Naive thymus-derived CD8-positive, alpha-beta T cell (primary cell): ENCODE measurements at regions of chr20 and their contacts with region 1.

Region 1: DNA sequence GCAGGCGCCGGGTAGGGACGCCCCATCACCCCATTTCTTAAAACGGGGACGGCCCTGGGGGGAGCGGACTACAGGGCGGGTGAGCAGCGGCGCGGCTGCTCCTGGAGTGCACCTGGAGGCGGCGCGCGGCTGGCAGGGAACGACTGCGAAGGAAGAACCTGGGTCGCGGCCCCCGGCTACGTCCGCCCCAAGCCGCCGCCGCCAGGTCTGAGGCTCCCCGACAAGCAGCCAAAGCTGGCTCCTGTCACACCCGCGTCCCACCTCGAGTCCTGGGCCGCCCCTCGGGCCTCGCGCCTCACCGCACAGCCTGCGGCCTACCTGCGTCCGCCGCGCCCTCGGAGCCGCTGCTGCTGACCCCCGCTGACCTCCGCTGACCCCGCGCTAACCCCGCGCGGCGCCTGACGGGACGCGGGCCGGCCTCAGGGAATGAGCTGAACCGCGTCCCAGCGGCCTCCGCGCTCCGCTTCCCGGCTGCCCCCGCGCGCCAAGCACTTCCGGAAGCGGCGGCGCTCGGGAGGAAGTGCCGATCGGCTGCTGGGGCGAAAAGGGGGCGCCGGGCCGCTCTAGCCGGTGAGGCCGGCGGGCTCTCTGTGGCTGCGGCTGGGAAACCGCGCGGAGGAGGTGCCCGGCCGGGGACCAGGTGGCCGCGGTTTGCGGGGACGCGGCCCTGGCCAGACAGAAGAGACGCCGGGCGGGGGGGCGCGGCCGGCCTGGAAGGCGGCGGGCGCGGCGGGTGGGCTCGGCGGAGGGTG is at the starts of genes ARFRP1 and ZGPAT:
- DNase-seq: peak; percentile 70 to 88 (median 84)
- ATAC-seq: peak; percentile 81 to 83
- H3K4me3 Mint-ChIP-seq: peak within 1 kb of the TSS; percentile 84 to 95 (median 90)
- H3K27ac Mint-ChIP-seq: peak within 1 kb of the TSS; percentile 88 to 95 (median 92)
- H3K4me1 Mint-ChIP-seq: peaks cover 27 to 60% (median 54%) of the 10 kb centered on the region in 4 donors
- H3K27me3 Mint-ChIP-seq: no peaks in the 10 kb centered on the region
- polyA plus RNA-seq, gene ARFRP1: 60.1 to 92.1 (median 80.9) TPM
- polyA plus RNA-seq, gene ZGPAT: 42.3 to 73.8 (median 47.1) TPM

Region 2: GRCh38 chr20:63657937-63658748 is 49.6 kb before region 1 on chr20 and contains the start of gene RTEL1:
- POLR2A ChIA-PET with region 1: interaction called, 19 read pairs
- DNase-seq: peak; percentile 73 to 98 (median 86)
- ATAC-seq: peak; percentile 82 to 85
- H3K4me3 Mint-ChIP-seq: peak within 1 kb of the TSS; percentile 90 to 99 (median 96)
- H3K27ac Mint-ChIP-seq: peak within 1 kb of the TSS; percentile 92 to 98 (median 96)
- H3K4me1 Mint-ChIP-seq: peaks cover 18 to 49% (median 39%) of the 10 kb centered on the region in 4 donors
- H3K27me3 Mint-ChIP-seq: no peaks in the 10 kb centered on the region
- polyA plus RNA-seq, gene RTEL1: 3.2 to 6.8 (median 4.4) TPM

Region 3: GRCh38 chr20:63686492-63687321 is 21.0 kb before region 1 on chr20:
- POLR2A ChIA-PET with region 1: no interaction called
- DNase-seq: no peak
- ATAC-seq: peak; percentile 24 to 63
- H3K4me3 Mint-ChIP-seq: no peak overlapping the region
- H3K27ac Mint-ChIP-seq: no peak overlapping the region
- H3K4me1 Mint-ChIP-seq: peaks cover 0 to 12% (median 6%) of the 10 kb centered on the region in 4 donors
- H3K27me3 Mint-ChIP-seq: no peaks in the 10 kb centered on the region

Region 4: DNA sequence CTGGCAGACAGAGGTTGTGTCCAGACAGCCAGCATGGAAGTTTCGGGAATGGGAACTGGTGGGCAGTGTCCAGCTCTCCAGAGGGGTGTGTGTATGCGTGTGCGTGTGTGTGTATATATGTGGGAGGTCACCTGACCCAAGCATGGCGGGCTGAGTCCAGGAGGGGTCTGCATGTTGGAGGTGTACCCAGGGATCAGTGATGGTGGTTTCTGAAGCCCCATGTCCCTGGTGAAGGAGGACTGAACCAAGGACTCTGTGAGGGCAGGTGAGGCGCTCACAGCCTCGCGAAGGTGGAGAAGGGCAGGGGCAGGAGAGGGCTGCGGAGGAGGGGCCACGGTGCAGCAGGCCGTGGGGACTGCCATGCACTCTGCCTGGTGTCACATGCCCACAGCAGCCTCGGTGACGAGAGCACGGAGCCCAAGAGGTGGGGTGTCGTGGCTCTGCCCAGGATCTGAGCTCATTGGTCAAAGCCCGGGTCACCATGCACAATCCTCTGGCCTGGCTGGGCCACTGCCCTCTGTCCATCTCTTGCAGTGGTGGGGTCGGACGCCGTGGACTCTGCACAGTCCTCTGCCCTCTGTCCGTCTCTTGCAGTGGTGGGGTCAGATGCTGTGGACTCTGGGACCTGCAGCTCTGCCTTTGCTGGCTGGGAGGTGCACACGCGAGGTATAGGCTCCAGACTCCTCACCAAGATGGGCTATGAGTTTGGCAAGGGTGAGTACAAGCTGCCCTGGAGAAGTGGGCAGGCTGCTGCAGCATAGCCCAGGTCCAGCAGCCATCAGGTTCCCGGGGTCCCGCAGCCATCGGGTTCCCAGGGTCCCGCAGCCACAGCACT is 26.6 kb after region 1 on chr20:
- POLR2A ChIA-PET with region 1: interaction called, 162 read pairs
- DNase-seq: no peak
- ATAC-seq: no peak
- H3K4me3 Mint-ChIP-seq: peak overlapping the region in 7 of 10 donors; percentile 4 to 49 (median 41)
- H3K27ac Mint-ChIP-seq: peak overlapping the region in 8 of 10 donors; percentile 51 to 92 (median 74)
- H3K4me1 Mint-ChIP-seq: peaks cover 22 to 30% (median 29%) of the 10 kb centered on the region in 4 donors
- H3K27me3 Mint-ChIP-seq: no peaks in the 10 kb centered on the region

Region 5: DNA sequence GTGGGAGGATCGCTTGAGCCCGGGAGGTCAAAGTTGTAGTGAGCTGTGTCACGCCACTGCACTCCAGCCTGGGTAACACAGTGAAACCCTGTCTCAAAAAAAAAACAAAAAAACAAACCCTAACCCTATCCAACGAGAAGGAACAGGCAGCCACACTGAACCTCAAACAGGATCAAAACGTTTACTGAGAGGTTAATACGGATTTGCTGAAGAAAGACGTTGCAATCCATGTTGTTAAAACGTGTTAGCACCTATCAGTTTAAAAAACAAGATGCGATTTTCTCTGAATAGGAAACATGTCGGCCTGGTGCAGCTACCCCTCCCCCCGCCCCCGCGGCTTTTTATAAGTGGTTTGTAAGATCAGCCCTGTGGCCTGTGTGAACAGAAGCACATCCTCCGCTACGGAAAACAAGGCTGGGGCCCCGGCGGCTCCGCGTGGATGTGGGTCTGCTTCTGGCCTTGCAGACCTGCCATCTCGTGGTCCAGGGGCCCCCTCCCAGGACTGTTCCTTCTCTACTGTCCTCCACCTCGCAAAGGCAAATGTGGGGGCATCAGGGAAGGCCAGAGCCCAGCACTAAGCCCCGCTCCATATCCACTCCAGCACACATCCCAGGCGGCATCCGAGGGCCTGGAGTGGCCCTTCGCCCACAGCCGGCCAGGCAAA is 43.2 kb after region 1 on chr20:
- POLR2A ChIA-PET with region 1: interaction called, 26 read pairs
- DNase-seq: peak; percentile 45 to 86 (median 58)
- ATAC-seq: peak; percentile 93
- H3K4me3 Mint-ChIP-seq: peak overlapping the region; percentile 67 to 86 (median 78)
- H3K27ac Mint-ChIP-seq: peak overlapping the region in 9 of 10 donors; percentile 84 to 98 (median 94)
- H3K4me1 Mint-ChIP-seq: peaks cover 16 to 48% (median 35%) of the 10 kb centered on the region in 4 donors
- H3K27me3 Mint-ChIP-seq: no peaks in the 10 kb centered on the region

Region 6: GRCh38 chr20:63782051-63782471 is 74.3 kb after region 1 on chr20:
- POLR2A ChIA-PET with region 1: interaction called, 12 read pairs
- DNase-seq: peak; percentile 21 to 88 (median 70)
- ATAC-seq: peak; percentile 94 to 97
- H3K4me3 Mint-ChIP-seq: peak overlapping the region; percentile 22 to 80 (median 65)
- H3K27ac Mint-ChIP-seq: peak overlapping the region; percentile 44 to 93 (median 84)
- H3K4me1 Mint-ChIP-seq: peaks cover 8 to 28% (median 17%) of the 10 kb centered on the region in 4 donors
- H3K27me3 Mint-ChIP-seq: no peaks in the 10 kb centered on the region